Ascending aorta (tissue), 2 donors: ENCODE measurements at regions of chr1 and their contacts with region 1.

Region 1: DNA sequence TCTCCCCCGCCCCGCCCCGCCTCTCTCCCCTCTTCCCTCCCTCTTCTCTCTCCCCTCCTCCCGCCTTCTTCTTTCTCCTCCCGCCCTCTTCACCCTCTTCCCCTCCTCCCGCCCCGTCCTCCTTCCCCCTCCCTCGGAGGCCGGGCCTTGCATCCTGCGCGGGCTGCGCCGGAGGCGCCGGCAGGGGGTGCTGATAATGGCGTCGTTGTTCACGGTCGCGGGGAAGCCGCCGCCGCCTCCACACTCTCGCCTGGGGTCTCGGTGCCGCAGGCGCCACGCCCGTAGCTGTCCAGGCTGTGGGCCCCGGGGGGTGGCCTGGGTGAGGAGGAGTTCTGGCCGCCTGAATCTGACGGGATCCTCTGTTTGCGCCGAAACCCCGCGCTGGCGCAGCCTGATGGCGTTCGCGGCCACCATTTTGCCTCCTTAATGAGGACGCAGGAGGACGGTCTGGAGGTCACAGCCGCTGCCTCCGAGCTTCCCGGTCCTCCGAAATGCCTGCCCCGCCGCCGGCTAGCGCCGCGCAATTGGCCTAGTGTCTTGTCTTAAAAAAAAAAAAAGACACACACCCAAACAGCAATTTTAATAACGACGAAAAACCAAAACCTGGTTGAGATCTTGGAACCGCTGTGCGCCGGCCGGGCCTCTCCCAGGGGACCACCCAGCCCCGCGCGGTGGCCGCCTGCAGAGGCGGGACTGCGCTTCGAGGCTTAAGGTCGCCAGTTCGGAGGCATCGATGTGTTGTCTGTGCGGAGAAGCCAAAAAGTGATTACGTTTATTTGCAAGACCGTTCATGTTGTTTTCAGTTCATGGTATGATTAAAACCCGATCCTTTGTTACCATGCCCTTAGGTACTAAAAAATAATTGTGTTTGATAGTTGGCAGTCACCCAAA is 106.6 kb upstream of the HNRNPU start:
- DNase-seq: peak; percentile 69 to 95
- H3K4me3 ChIP-seq: peak overlapping the region; percentile 73 to 80
- H3K27ac ChIP-seq: peak overlapping the region; percentile 99
- H3K4me1 ChIP-seq: peaks cover 0 to 9% of the 10 kb centered on the region in 2 donors
- H3K27me3 ChIP-seq: no peaks in the 10 kb centered on the region
- CTCF ChIP-seq: peak; percentile 46 to 78 (median 69)

Region 2: GRCh38 chr1:243255791-243256512 is 1715.0 kb before region 1 on chr1 and contains the start of gene SDCCAG8:
- intact Hi-C with region 1: loop called (anchors 5 kb)
- DNase-seq: peak; percentile 98 to 100
- H3K4me3 ChIP-seq: peak within 1 kb of the TSS; percentile 84 to 99
- H3K27ac ChIP-seq: peak within 1 kb of the TSS; percentile 97 to 99
- H3K4me1 ChIP-seq: peaks cover 3 to 22% of the 10 kb centered on the region in 2 donors
- H3K27me3 ChIP-seq: no peaks in the 10 kb centered on the region
- CTCF ChIP-seq: no peak
- total RNA-seq, gene SDCCAG8: 97.1 TPM

Region 3: GRCh38 chr1:244652699-244653466 is 318.0 kb before region 1 on chr1 and contains the start of gene DESI2:
- intact Hi-C with region 1: loop called (anchors 1 kb)
- DNase-seq: peak; percentile 99 to 100
- H3K4me3 ChIP-seq: peak within 1 kb of the TSS; percentile 72 to 95
- H3K27ac ChIP-seq: peak within 1 kb of the TSS; percentile 93 to 99
- H3K4me1 ChIP-seq: peaks cover 0 to 25% of the 10 kb centered on the region in 2 donors
- H3K27me3 ChIP-seq: no peaks in the 10 kb centered on the region
- CTCF ChIP-seq: peak; percentile 45 to 58 (median 55)
- total RNA-seq, gene DESI2: 24.2 TPM

Region 4: GRCh38 chr1:244864253-244865027 is 106.5 kb before region 1 on chr1 and contains the start of gene HNRNPU:
- intact Hi-C with region 1: loop called (anchors 1 kb)
- DNase-seq: peak; percentile 86 to 99
- H3K4me3 ChIP-seq: peak within 1 kb of the TSS; percentile 90 to 100
- H3K27ac ChIP-seq: peak within 1 kb of the TSS; percentile 99 to 100
- H3K4me1 ChIP-seq: peaks cover 11 to 33% of the 10 kb centered on the region in 2 donors
- H3K27me3 ChIP-seq: no peaks in the 10 kb centered on the region
- CTCF ChIP-seq: peak; percentile 18 to 44 (median 41)
- total RNA-seq, gene HNRNPU: 128 TPM

Region 5: DNA sequence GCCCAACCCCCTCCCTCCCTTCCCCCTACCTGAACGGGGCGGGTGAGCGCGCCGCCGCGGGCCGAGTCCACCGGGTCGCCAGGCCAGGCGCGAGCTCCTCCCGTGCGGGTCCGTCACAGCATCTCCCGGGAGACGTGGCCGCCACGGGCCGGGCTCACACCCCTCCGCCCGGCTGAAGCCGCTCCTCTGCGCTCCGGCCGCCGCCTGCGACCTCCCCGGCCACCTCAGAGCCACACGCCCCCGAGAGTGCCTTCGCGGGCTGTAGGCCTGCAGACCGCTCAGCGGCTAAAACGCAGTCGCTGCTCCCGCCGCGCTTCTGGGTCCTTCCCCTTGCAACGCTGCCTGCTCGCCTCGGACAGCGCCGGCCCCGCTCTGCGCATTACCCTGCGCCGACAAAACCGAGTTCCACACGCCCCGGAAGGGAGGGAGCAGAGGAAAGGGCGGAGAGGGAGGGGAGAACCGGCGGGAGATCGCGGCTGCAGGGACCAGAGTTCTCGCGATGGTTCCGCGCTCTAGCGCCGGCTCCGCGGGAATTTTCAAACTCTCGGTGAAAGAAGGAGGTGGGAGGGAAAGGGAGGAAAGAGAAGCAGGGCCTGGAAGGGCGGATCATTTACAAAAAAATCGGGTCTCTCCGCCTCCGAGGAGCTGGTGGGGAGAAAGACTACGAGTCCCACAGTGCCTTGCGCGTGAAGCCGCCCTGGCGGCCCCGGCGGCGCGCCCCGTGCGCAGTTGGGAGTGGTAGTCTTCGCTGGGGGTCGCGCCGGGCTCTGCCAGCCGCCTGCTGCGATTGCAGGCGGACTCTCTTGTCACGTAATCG is 1960.9 kb after region 1 on chr1 and contains the start of gene AHCTF1:
- intact Hi-C with region 1: loop called (anchors 10 kb)
- DNase-seq: peak; percentile 87 to 98
- H3K4me3 ChIP-seq: peak within 1 kb of the TSS; percentile 95 to 98
- H3K27ac ChIP-seq: peak within 1 kb of the TSS; percentile 96 to 98
- H3K4me1 ChIP-seq: peaks cover 4 to 19% of the 10 kb centered on the region in 2 donors
- H3K27me3 ChIP-seq: no peaks in the 10 kb centered on the region
- CTCF ChIP-seq: peak in 1 of 3 experiments; percentile 7
- total RNA-seq, gene AHCTF1: 16.5 TPM